Activated CD8-positive, alpha-beta T cell treated with anti-CD3 and anti-CD28 coated beads for 36 hours (primary cell): ENCODE measurements at regions of chr7 and their contacts with region 1.

Region 1: DNA sequence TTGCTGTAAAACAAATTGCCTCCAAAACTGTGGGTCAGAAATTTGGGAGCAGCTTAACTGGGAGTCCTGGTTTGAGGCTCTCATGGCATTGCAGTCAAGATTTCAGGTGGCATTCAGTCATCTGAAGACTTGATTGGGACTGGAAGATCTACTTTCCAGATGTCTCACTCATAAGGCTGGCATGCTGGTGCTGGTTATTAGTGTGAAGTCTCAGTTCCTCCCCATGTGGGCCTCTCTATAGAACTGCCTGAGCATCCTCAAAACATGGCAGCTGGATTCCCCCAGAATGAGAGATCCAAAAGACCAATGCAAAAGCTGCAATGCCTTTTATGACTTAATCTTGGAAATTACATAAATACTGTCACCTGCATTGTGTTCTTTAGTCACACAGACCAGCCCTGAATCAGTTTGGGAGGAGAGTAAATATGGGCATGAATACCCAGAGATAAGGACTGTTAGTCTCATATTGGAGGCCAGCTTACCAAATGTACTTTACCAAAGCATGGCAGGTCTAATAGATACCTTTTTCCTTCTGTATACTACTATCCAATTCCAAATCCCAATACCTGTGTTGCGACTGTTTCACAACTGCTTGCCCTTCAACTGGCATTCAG is 6.5 kb upstream of the HERPUD2 start:
- DNase-seq: no peak
- ATAC-seq: peak; percentile 49
- H3K4me3 Mint-ChIP-seq: no peak overlapping the region
- H3K27ac Mint-ChIP-seq: no peak overlapping the region
- H3K4me1 Mint-ChIP-seq: peaks cover 31% of the 10 kb centered on the region
- H3K27me3 Mint-ChIP-seq: no peaks in the 10 kb centered on the region
- CTCF ChIP-seq: no peak

Region 2: DNA sequence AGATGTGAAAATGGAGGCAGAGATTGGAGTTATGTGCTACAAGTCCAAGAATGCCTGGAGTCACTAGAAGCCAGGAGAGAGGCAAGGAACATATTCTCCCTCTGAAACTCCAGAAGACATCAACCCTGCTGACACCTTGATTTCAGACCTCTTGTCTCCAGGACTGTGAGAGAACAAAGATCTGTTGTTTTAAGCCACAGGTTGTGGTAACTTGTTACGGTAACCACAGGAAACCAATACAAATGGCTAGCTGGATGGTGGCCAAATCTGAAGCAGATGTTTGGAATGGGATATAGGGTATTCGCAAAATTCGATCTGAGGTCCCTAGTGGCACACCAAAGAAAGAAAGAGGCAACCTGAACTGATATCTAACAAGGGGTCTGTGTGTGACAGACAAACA is 135.5 kb before region 1 on chr7:
- CTCF ChIA-PET with region 1: no interaction called
- POLR2A ChIA-PET with region 1: no interaction called
- intact Hi-C with region 1: no loop called
- DNase-seq: no peak
- ATAC-seq: no peak
- H3K4me3 Mint-ChIP-seq: no peak overlapping the region
- H3K27ac Mint-ChIP-seq: no peak overlapping the region
- H3K4me1 Mint-ChIP-seq: peaks cover 2% of the 10 kb centered on the region
- H3K27me3 Mint-ChIP-seq: peaks cover 3% of the 10 kb centered on the region
- CTCF ChIP-seq: no peak

Region 3: DNA sequence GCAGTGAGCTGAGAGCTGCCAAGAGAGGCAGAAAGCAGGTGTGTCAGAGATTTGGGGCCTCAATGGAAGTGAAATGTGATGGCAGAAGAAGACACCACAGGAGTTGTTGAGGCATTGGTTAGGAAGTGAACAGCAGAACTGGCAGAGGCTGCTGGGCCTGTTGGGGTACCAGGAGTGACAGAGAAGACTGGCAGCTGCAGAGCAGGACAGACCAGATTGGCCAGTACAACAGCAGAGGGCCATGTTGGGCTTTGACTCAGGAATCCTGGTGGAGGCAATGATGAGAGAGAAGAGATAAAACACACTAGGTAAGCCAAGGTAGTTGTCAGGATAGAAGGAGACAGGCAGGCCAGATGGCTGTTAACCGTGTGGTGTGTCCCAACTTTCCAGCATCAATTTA is 13.5 kb after region 1 on chr7:
- CTCF ChIA-PET with region 1: interaction called, 41 read pairs
- POLR2A ChIA-PET with region 1: no interaction called
- intact Hi-C with region 1: no loop called
- DNase-seq: no peak
- ATAC-seq: peak; percentile 34
- H3K4me3 Mint-ChIP-seq: no peak overlapping the region
- H3K27ac Mint-ChIP-seq: no peak overlapping the region
- H3K4me1 Mint-ChIP-seq: peaks cover 12% of the 10 kb centered on the region
- H3K27me3 Mint-ChIP-seq: no peaks in the 10 kb centered on the region
- CTCF ChIP-seq: no peak

Region 4: GRCh38 chr7:35753761-35754603 is 52.6 kb after region 1 on chr7:
- CTCF ChIA-PET with region 1: no interaction called
- POLR2A ChIA-PET with region 1: no interaction called
- intact Hi-C with region 1: no loop called
- DNase-seq: no peak
- ATAC-seq: no peak
- H3K4me3 Mint-ChIP-seq: no peak overlapping the region
- H3K27ac Mint-ChIP-seq: no peak overlapping the region
- H3K4me1 Mint-ChIP-seq: peaks cover 10% of the 10 kb centered on the region
- H3K27me3 Mint-ChIP-seq: no peaks in the 10 kb centered on the region
- CTCF ChIP-seq: no peak